BJ (cell line): ENCODE measurements at regions of chr18 and their contacts with region 1.

Region 1: DNA sequence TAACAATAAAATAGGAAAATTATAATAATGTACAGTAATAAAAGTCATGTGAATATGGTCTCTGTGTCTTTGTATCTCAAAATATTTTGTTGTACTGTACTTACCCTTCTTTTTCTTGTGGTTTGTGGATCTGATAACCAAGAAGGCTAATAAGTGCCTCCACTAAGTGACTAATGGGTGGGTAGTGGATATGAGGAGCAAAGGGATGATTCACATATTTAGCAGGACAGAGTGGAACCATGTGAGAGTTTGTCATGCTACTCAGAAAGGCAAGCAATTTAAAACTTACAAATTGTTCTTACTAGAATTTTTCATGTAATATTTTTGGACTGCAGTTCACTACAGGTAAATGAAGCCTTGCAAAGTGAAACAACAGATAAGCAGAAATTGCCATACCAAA is 1241.2 kb upstream of the CDH2 start:
- DNase-seq: peak; percentile 50
- H3K4me3 ChIP-seq: no peak overlapping the region
- H3K27me3 ChIP-seq: no peaks in the 10 kb centered on the region
- CTCF ChIP-seq: no peak

Region 2: GRCh38 chr18:29181151-29181901 is 236.8 kb before region 1 on chr18:
- CTCF ChIA-PET with region 1: no interaction called
- POLR2A ChIA-PET with region 1: interaction called, 15 read pairs
- DNase-seq: peak; percentile 97
- H3K4me3 ChIP-seq: no peak overlapping the region
- H3K27me3 ChIP-seq: no peaks in the 10 kb centered on the region
- CTCF ChIP-seq: no peak